ENCODE measurements at regions of chr1 and their contacts with region 1.

Region 1: DNA sequence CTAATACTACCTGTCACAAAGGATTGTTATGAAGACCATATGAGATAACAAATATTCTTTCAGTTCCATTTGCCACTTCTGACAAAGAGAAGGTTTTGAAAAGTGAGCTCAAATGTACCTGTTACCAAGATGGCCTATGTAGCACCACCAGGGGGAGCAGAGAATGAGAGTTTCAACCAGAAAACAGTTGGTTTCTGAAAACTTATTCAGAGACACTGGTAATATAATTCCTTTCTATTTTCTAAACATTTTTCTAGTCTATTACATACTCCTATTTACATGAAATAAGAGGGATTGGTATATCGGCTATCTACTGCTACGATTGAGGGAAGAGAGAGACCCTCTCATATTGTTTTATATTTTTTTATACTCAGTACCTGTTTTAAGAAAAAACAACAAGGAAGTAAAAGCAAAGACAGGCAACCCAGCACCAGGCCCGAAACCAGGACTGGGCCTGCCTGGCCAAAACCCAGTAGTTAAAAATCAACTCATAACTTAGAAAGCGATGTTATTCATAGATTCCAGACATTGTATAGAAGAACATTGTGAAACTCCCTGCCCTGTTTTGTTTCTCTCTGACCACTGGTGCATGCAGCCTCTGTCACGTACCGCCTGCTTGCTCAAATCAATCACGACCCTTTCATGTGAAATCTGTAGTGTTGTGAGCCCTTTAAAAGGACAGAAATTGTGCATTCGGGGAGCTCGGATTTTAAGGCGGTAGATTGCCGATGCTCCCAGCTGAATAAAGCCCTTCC is 48.3 kb downstream of the IL23R start:
- DNase-seq: peak; percentile 68
- ATAC-seq: peak; percentile 86
- H3K4me3 ChIP-seq: peak overlapping the region; percentile 14; the same call in 1 of the 2 replicates
- H3K27ac ChIP-seq: peak overlapping the region; percentile 71
- H3K4me1 ChIP-seq: peaks cover 31% of the 10 kb centered on the region
- H3K27me3 ChIP-seq: no peaks in the 10 kb centered on the region
- CTCF ChIP-seq: peak; percentile 33 to 67 (median 66)
- EP300 ChIP-seq: 0 out of 4 replicates have a peak, but pooled peaks of 1 of the 2 experiments have one; percentile 3
- POLR2A ChIP-seq: no peak
- RAD21 ChIP-seq: peak; percentile 52

Region 2: GRCh38 chr1:66654643-66655042 is 560.0 kb before region 1 on chr1:
- CTCF ChIA-PET with region 1: no interaction called
- POLR2A ChIA-PET with region 1: no interaction called
- RAD21 ChIA-PET with region 1: no interaction called
- SMC1A ChIA-PET with region 1: no interaction called
- in situ Hi-C with region 1: no loop called
- intact Hi-C with region 1: no loop called
- DNase-seq: no peak
- ATAC-seq: no peak
- H3K4me3 ChIP-seq: no peak overlapping the region
- H3K27ac ChIP-seq: no peak overlapping the region
- H3K4me1 ChIP-seq: no peaks in the 10 kb centered on the region; the same call in 1 of the 2 replicates
- H3K27me3 ChIP-seq: no peaks in the 10 kb centered on the region; a peak in 1 of 4 replicates
- CTCF ChIP-seq: no peak
- EP300 ChIP-seq: no peak
- POLR2A ChIP-seq: no peak
- RAD21 ChIP-seq: no peak

Region 3: GRCh38 chr1:66996018-66996682 is 218.4 kb before region 1 on chr1:
- CTCF ChIA-PET with region 1: interaction called, 114 read pairs
- POLR2A ChIA-PET with region 1: interaction called, 4 read pairs
- RAD21 ChIA-PET with region 1: interaction called, 58 read pairs
- SMC1A ChIA-PET with region 1: interaction called, 60 read pairs
- in situ Hi-C with region 1: loop called (anchors 5 kb)
- intact Hi-C with region 1: loop called (anchors 1 kb)
- DNase-seq: peak; percentile 59
- ATAC-seq: peak; percentile 89
- H3K4me3 ChIP-seq: no peak overlapping the region
- H3K27ac ChIP-seq: no peak overlapping the region
- H3K4me1 ChIP-seq: no peaks in the 10 kb centered on the region
- H3K27me3 ChIP-seq: no peaks in the 10 kb centered on the region
- CTCF ChIP-seq: peak; percentile 76 to 85 (median 81)
- EP300 ChIP-seq: no peak
- POLR2A ChIP-seq: no peak
- RAD21 ChIP-seq: peak; percentile 94

Region 4: GRCh38 chr1:67134695-67135094 is 79.9 kb before region 1 on chr1 and contains the start of gene C1orf141:
- CTCF ChIA-PET with region 1: interaction called, 46 read pairs
- POLR2A ChIA-PET with region 1: no interaction called
- RAD21 ChIA-PET with region 1: no interaction called
- SMC1A ChIA-PET with region 1: interaction called, 7 read pairs
- in situ Hi-C with region 1: no loop called
- intact Hi-C with region 1: no loop called
- DNase-seq: no peak
- ATAC-seq: no peak
- H3K4me3 ChIP-seq: no peak within 1 kb of the TSS; the same call in 1 of the 2 replicates
- H3K27ac ChIP-seq: no peak within 1 kb of the TSS
- H3K4me1 ChIP-seq: no peaks in the 10 kb centered on the region
- H3K27me3 ChIP-seq: 0 out of 4 replicates have a peak, but pooled peaks cover 0 to 2% of the 10 kb centered on the region in 2 experiments
- CTCF ChIP-seq: no peak
- EP300 ChIP-seq: no peak
- POLR2A ChIP-seq: no peak
- RAD21 ChIP-seq: no peak
- polyA plus RNA-seq, gene C1orf141: not detected

Region 5: DNA sequence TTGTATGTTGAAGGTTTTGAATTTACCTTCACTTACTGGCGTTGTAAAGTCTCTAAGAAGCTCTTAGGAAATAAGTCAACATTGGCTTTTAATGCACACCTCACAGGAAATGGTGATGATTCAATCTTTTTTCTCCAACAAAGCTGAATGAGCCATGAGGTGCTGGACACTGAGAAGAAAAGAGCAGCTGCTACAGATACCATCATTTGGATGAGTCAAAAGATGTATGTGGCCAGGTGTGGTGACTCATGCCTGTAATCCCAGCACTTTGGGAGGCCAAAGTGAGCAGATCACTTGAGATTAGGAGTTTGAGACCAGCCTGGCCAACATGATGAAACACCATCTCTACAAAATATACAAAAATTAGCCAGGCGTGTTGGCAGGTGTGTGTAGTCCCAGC is 51.6 kb before region 1 on chr1:
- CTCF ChIA-PET with region 1: interaction called, 163 read pairs
- POLR2A ChIA-PET with region 1: no interaction called
- RAD21 ChIA-PET with region 1: interaction called, 93 read pairs
- SMC1A ChIA-PET with region 1: interaction called, 54 read pairs
- in situ Hi-C with region 1: no loop called
- intact Hi-C with region 1: loop called (anchors 2 kb)
- DNase-seq: no peak
- ATAC-seq: peak; percentile 53
- H3K4me3 ChIP-seq: no peak overlapping the region
- H3K27ac ChIP-seq: no peak overlapping the region
- H3K4me1 ChIP-seq: peaks cover 3% of the 10 kb centered on the region; the same call in 1 of the 2 replicates
- H3K27me3 ChIP-seq: no peaks in the 10 kb centered on the region
- CTCF ChIP-seq: no peak
- EP300 ChIP-seq: no peak; a peak in 1 of 4 replicates
- POLR2A ChIP-seq: no peak
- RAD21 ChIP-seq: no peak

Region 6: GRCh38 chr1:67227196-67227595 is 12.6 kb after region 1 on chr1:
- CTCF ChIA-PET with region 1: interaction called, 55 read pairs
- POLR2A ChIA-PET with region 1: interaction called, 3 read pairs
- RAD21 ChIA-PET with region 1: interaction called, 4 read pairs
- SMC1A ChIA-PET with region 1: interaction called, 16 read pairs
- in situ Hi-C with region 1: no loop called
- intact Hi-C with region 1: no loop called
- DNase-seq: no peak
- ATAC-seq: no peak
- H3K4me3 ChIP-seq: no peak overlapping the region
- H3K27ac ChIP-seq: no peak overlapping the region
- H3K4me1 ChIP-seq: no peaks in the 10 kb centered on the region
- H3K27me3 ChIP-seq: no peaks in the 10 kb centered on the region; a peak in 1 of 4 replicates
- CTCF ChIP-seq: no peak
- EP300 ChIP-seq: no peak
- POLR2A ChIP-seq: no peak
- RAD21 ChIP-seq: no peak

Region 7: GRCh38 chr1:67347688-67348472 is 133.3 kb after region 1 on chr1:
- CTCF ChIA-PET with region 1: interaction called, 40 read pairs
- POLR2A ChIA-PET with region 1: no interaction called
- RAD21 ChIA-PET with region 1: interaction called, 25 read pairs
- SMC1A ChIA-PET with region 1: interaction called, 49 read pairs
- in situ Hi-C with region 1: no loop called
- intact Hi-C with region 1: no loop called
- DNase-seq: no peak
- ATAC-seq: peak; percentile 85
- H3K4me3 ChIP-seq: no peak overlapping the region
- H3K27ac ChIP-seq: no peak overlapping the region
- H3K4me1 ChIP-seq: peaks cover 7% of the 10 kb centered on the region
- H3K27me3 ChIP-seq: no peaks in the 10 kb centered on the region
- CTCF ChIP-seq: peak; percentile 62 to 70 (median 68)
- EP300 ChIP-seq: no peak
- POLR2A ChIP-seq: no peak
- RAD21 ChIP-seq: peak; percentile 71

Region 8: GRCh38 chr1:67500413-67500959 is 285.9 kb after region 1 on chr1:
- CTCF ChIA-PET with region 1: interaction called, 166 read pairs
- POLR2A ChIA-PET with region 1: interaction called, 5 read pairs
- RAD21 ChIA-PET with region 1: interaction called, 73 read pairs
- SMC1A ChIA-PET with region 1: interaction called, 97 read pairs
- in situ Hi-C with region 1: no loop called
- intact Hi-C with region 1: loop called (anchors 1 kb)
- DNase-seq: peak; percentile 55
- ATAC-seq: peak; percentile 100
- H3K4me3 ChIP-seq: no peak overlapping the region
- H3K27ac ChIP-seq: no peak overlapping the region
- H3K4me1 ChIP-seq: peaks cover 3% of the 10 kb centered on the region; the same call in 1 of the 2 replicates
- H3K27me3 ChIP-seq: 0 out of 4 replicates have a peak, but pooled peaks cover 0 to 2% of the 10 kb centered on the region in 2 experiments
- CTCF ChIP-seq: peak; percentile 97 to 99 (median 99); a peak in 5 of 6 replicates
- EP300 ChIP-seq: no peak
- POLR2A ChIP-seq: no peak
- RAD21 ChIP-seq: peak; percentile 100